H1 (cell line): ENCODE measurements at regions of chr9 and their contacts with region 1.

Region 1: DNA sequence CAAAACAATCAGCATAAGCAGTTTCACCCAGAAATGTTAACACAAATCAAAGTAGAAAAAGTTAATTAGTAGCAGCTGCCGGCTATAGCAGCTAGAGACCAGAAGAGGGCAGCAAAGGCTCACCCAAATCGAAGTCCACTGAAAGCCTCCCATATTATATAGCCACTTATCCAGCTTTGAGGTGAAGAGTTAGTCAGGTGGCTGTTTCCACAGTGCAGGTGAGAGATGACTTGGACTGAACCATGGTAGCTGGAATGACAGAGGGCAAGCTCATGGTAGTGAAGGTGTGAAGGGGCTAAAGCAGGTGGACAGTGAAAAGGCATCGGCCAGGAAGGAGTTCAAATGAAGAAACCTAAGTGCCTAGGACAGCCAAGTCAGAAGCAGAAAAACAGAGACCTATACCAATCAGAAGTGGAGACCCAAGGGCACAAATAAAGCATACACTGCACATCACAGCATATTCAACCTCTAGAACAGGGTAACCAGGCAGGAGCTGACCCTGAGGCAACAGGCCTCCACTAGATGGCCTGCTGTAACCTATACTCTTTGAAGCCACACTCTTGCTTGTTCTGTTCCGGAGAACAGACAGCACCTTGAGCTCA is 7.2 kb upstream of the RNF38 start:
- DNase-seq: peak in 1 of 2 experiments; percentile 54
- H3K4me3 ChIP-seq: no peak overlapping the region
- H3K27ac ChIP-seq: no peak overlapping the region; the same call in 1 of the 2 replicates
- H3K4me1 ChIP-seq: peaks cover 0 to 5% (median 3%) of the 10 kb centered on the region in 4 experiments; a peak in 2 of 7 replicates
- H3K27me3 ChIP-seq: no peaks in the 10 kb centered on the region
- CTCF ChIP-seq: peak; percentile 34 to 86 (median 84)
- EP300 ChIP-seq: no peak
- POLR2A ChIP-seq: no peak
- RAD21 ChIP-seq: peak; percentile 90 to 95

Region 2: GRCh38 chr9:36218411-36218901 is 188.8 kb before region 1 on chr9:
- CTCF ChIA-PET with region 1: no interaction called
- POLR2A ChIA-PET with region 1: no interaction called
- DNase-seq: no peak
- H3K4me3 ChIP-seq: no peak overlapping the region
- H3K27ac ChIP-seq: no peak overlapping the region
- H3K4me1 ChIP-seq: no peaks in the 10 kb centered on the region
- H3K27me3 ChIP-seq: no peaks in the 10 kb centered on the region
- CTCF ChIP-seq: no peak
- EP300 ChIP-seq: no peak
- POLR2A ChIP-seq: no peak
- RAD21 ChIP-seq: no peak

Region 3: GRCh38 chr9:36431078-36431477 is 23.9 kb after region 1 on chr9:
- CTCF ChIA-PET with region 1: interaction called, 52 read pairs
- POLR2A ChIA-PET with region 1: no interaction called
- DNase-seq: no peak
- H3K4me3 ChIP-seq: no peak overlapping the region
- H3K27ac ChIP-seq: no peak overlapping the region
- H3K4me1 ChIP-seq: peaks cover 1 to 6% (median 3%) of the 10 kb centered on the region in 4 experiments; a peak in 4 of 7 replicates
- H3K27me3 ChIP-seq: no peaks in the 10 kb centered on the region
- CTCF ChIP-seq: peak in 1 of 3 experiments; percentile 14; a peak in 1 of 4 replicates
- EP300 ChIP-seq: no peak
- POLR2A ChIP-seq: no peak
- RAD21 ChIP-seq: no peak

Region 4: GRCh38 chr9:36441966-36442365 is 34.7 kb after region 1 on chr9:
- CTCF ChIA-PET with region 1: interaction called, 78 read pairs
- POLR2A ChIA-PET with region 1: interaction called, 4 read pairs
- DNase-seq: no peak
- H3K4me3 ChIP-seq: no peak overlapping the region
- H3K27ac ChIP-seq: no peak overlapping the region
- H3K4me1 ChIP-seq: peaks cover 5 to 13% (median 6%) of the 10 kb centered on the region in 4 experiments
- H3K27me3 ChIP-seq: no peaks in the 10 kb centered on the region
- CTCF ChIP-seq: no peak
- EP300 ChIP-seq: no peak
- POLR2A ChIP-seq: no peak
- RAD21 ChIP-seq: no peak

Region 5: DNA sequence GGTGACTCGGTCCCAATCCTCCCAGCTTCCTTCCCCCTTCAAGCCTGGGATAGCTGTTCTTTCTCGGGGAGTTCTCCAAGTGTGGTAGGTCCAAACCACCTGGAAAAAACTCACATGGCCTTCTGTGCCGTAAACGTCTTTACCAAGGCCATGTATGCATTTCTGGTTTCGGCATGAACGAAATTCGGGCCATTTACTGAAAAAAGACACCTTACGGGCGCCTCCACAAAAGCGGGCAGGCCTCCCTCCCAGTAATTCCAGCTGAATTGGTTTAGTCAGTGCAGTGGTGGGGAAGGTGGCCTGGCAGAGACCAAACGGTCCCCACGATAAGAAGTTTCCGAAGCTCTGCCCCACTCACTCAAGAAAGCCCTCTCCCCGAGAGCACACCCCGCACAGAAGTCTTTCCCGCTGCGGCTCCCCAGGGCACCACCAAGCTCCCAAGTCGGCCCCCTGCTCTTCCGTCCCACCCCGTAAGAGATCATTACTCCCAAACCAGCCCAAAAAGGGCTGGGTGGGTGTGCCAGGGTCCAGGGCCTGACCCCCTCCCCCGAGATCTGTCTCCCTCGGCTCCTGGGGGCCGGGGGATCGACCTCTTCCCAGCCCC is 79.2 kb after region 1 on chr9:
- CTCF ChIA-PET with region 1: interaction called, 13 read pairs
- POLR2A ChIA-PET with region 1: no interaction called
- DNase-seq: no peak
- H3K4me3 ChIP-seq: peak overlapping the region; percentile 84 to 98 (median 94)
- H3K27ac ChIP-seq: peak overlapping the region; percentile 68
- H3K4me1 ChIP-seq: peaks cover 5 to 29% (median 20%) of the 10 kb centered on the region in 4 experiments
- H3K27me3 ChIP-seq: no peaks in the 10 kb centered on the region
- CTCF ChIP-seq: no peak
- EP300 ChIP-seq: no peak
- POLR2A ChIP-seq: no peak
- RAD21 ChIP-seq: no peak

Region 6: DNA sequence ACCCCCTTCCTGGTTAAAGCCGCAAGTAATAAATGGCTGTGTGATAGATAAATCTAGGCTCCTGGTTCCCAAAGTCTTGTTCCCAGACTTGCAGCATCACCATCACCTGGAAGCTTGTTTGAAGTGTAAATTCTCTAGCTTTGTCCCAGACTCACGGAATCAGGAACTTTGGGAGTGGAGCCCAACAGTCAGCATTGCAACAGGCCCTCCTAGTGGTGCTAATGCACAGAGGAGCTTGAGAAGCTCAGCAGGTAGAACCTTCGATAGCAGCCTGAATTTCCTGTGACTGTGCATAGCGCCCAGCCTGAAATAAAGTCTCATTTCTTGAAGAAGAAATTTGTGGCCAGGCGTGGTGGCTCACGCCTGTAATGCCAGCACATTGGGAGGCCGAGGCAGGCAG is 135.1 kb after region 1 on chr9:
- CTCF ChIA-PET with region 1: interaction called, 10 read pairs
- POLR2A ChIA-PET with region 1: no interaction called
- DNase-seq: no peak
- H3K4me3 ChIP-seq: no peak overlapping the region
- H3K27ac ChIP-seq: no peak overlapping the region
- H3K4me1 ChIP-seq: no peaks in the 10 kb centered on the region
- H3K27me3 ChIP-seq: no peaks in the 10 kb centered on the region
- CTCF ChIP-seq: peak; percentile 29 to 48 (median 37)
- EP300 ChIP-seq: no peak
- POLR2A ChIP-seq: no peak
- RAD21 ChIP-seq: peak; percentile 42 to 63

Region 7: GRCh38 chr9:36560857-36561221 is 153.6 kb after region 1 on chr9:
- CTCF ChIA-PET with region 1: interaction called, 120 read pairs
- POLR2A ChIA-PET with region 1: interaction called, 3 read pairs
- DNase-seq: no peak
- H3K4me3 ChIP-seq: no peak overlapping the region
- H3K27ac ChIP-seq: no peak overlapping the region
- H3K4me1 ChIP-seq: peaks cover 2 to 5% (median 3%) of the 10 kb centered on the region in 4 experiments; a peak in 4 of 7 replicates
- H3K27me3 ChIP-seq: no peaks in the 10 kb centered on the region
- CTCF ChIP-seq: no peak
- EP300 ChIP-seq: no peak
- POLR2A ChIP-seq: no peak
- RAD21 ChIP-seq: no peak

Region 8: GRCh38 chr9:36728651-36729520 is 321.7 kb after region 1 on chr9:
- CTCF ChIA-PET with region 1: interaction called, 10 read pairs
- POLR2A ChIA-PET with region 1: no interaction called
- DNase-seq: peak; percentile 70 to 99
- H3K4me3 ChIP-seq: no peak overlapping the region
- H3K27ac ChIP-seq: no peak overlapping the region
- H3K4me1 ChIP-seq: peaks cover 2 to 13% (median 4%) of the 10 kb centered on the region in 4 experiments; a peak in 6 of 7 replicates
- H3K27me3 ChIP-seq: no peaks in the 10 kb centered on the region
- CTCF ChIP-seq: peak; percentile 92 to 97 (median 93)
- EP300 ChIP-seq: no peak; a peak in 1 of 3 replicates
- POLR2A ChIP-seq: no peak
- RAD21 ChIP-seq: peak; percentile 96 to 97